ENCODE measurements at regions of chr5 and their contacts with region 1.

Region 1: DNA sequence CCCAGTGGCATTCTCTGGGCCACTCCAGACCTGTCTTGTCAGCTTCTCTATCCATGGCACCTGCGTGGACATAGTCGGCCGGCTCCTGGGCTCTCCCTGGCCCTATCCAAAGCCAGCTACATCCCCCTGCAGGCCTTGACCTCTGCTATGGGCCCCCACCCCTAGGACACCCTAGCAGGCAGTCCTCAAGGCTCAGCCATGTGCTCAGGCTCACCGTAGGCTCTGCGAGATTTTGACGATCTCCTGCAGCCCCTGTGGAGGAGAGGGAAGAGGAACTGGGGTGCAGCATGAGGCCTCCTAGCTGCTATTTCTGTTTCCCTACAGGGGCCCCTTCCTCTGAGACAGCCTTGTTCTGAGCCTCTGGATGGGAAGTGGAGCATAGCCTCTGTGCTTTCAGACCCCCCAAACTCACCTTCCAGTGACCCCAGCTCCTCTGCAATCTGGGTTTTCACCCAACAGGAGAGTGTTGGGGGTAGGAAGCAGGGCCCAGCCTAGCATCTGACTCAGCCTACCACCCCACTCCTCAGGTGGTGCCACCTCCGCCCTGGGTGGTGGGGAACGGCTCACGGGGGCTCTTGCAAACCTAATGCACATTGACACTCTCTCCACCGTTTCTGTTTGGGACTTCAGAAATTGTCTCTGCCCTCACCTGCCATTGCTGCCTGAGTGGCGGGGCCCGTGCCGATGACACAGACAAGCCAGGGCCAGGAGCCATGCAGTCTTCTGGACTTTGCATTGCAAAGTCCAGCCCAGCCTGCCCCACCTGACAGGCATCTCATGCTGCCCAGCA is 36.7 kb downstream of the HRH2 start:
- DNase-seq: peak in 3 of 10 donors; percentile 58 to 86 (median 84)

Region 2: DNA sequence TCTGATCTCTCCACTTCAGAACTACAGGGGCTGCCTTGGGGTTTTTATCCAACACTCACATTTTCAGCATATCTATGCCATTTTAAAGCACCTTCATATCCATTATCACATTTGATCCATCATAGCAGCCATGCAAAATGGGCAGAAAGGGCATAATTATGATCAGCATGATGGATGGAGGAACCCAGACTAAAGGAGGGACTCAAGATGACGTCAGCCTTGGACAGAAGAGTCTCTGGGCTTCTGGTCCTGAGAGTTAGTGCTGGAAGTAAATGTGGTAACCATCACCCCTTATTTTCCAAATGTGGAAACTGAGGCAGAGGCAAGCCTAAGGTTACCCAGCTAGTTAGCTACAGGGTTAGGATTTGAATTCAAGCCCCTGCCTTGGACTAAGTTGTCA is 523.7 kb before region 1 on chr5:
- intact Hi-C with region 1: no loop called
- DNase-seq: no peak

Region 3: GRCh38 chr5:175534070-175534932 is 160.3 kb before region 1 on chr5:
- intact Hi-C with region 1: loop called (anchors 2 kb)
- DNase-seq: peak; percentile 74 to 98 (median 85)

Measured in posterior cingulate gyrus (tissue), 11 donors.